ENCODE measurements at regions of chrX and their contacts with region 1.

Region 1: DNA sequence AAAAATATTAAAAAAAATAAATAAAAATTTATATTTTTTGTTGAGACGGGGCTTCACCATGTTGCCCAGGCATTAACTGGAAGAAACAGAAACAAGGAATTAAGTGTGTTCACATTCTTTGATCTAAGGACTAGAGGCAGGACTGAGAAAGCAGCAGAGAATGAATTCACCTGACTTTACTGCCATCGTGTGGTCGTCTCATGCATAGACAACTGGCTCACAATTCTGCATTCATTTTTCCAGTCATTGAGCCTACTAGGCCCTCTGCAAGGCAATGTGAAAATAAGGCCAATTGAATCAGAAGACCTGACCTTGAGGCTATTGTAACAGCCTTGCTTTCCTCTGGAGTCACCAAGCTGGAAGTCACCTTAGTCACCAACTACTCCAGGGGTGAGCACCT is 37.4 kb downstream of the LHFPL1 start:
- DNase-seq: peak; percentile 74
- H3K4me3 Mint-ChIP-seq: no peak overlapping the region
- H3K27ac Mint-ChIP-seq: no peak overlapping the region
- H3K4me1 Mint-ChIP-seq: no peaks in the 10 kb centered on the region
- H3K27me3 Mint-ChIP-seq: peaks cover 56% of the 10 kb centered on the region
- CTCF ChIP-seq: peak; percentile 78

Region 2: DNA sequence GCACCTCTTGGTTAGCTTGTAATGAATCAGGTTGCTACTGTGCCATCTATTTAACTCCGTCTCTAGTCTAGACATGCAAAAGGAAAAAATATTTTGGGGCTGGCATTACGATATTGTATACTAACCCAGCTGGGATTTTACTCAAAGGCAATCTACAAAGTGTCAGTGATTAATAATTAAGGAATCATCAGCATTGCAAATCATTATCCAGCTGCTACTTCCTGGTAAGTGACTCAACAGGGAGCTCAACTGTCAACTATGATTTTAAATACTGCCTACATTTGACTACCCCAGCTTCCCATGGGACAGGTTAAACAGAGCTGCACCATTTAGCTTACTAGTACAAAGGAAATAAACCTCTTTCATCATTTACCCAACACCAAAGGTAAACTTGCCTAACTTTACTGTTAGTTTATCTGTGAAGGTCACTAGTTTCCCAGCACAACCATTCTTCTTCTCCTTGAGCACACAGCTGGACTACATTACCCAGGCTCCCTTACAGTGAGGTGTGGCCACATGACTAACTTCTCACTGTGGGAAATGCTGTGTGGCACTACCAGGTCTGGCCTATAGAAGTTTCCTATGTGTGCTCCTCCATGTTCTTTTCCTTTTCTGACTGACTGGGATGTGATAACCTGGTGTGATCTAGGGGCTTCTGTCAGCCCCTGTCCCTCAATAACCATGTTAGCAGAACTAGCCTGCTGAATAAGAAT is 787.4 kb before region 1 on chrX:
- CTCF ChIA-PET with region 1: no interaction called
- POLR2A ChIA-PET with region 1: no interaction called
- intact Hi-C with region 1: no loop called
- DNase-seq: peak; percentile 19
- H3K4me3 Mint-ChIP-seq: no peak overlapping the region
- H3K27ac Mint-ChIP-seq: no peak overlapping the region
- H3K4me1 Mint-ChIP-seq: no peaks in the 10 kb centered on the region
- H3K27me3 Mint-ChIP-seq: peaks cover 74% of the 10 kb centered on the region
- CTCF ChIP-seq: no peak

Region 3: GRCh38 chrX:111869639-111870034 is 772.7 kb before region 1 on chrX:
- CTCF ChIA-PET with region 1: interaction called, 36 read pairs
- POLR2A ChIA-PET with region 1: no interaction called
- intact Hi-C with region 1: loop called (anchors 1 kb)
- DNase-seq: peak; percentile 61
- H3K4me3 Mint-ChIP-seq: no peak overlapping the region
- H3K27ac Mint-ChIP-seq: no peak overlapping the region
- H3K4me1 Mint-ChIP-seq: peaks cover 6% of the 10 kb centered on the region
- H3K27me3 Mint-ChIP-seq: peaks cover 59% of the 10 kb centered on the region
- CTCF ChIP-seq: peak; percentile 60

Region 4: DNA sequence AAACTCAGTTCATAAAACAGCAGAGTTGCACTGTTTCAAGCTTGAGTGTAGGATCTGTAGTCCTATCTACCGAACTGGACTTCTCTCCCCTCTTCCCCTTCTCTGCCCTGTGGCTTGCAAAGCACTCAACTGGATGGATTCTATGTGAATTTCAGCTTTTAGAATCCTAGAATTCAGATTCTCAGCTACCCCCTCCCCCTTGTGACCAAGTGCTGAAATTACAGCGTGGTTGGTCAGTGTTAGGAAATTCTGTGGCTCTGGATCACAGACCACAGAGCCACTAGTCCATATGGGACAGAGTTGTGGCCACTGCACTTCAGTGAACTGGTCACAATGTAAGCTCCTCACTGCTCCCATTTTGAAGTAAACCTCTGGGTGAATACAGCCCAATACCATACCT is 495.1 kb before region 1 on chrX:
- CTCF ChIA-PET with region 1: no interaction called
- POLR2A ChIA-PET with region 1: interaction called, 3 read pairs
- intact Hi-C with region 1: loop called (anchors 10 kb)
- DNase-seq: peak; percentile 49
- H3K4me3 Mint-ChIP-seq: no peak overlapping the region
- H3K27ac Mint-ChIP-seq: no peak overlapping the region
- H3K4me1 Mint-ChIP-seq: no peaks in the 10 kb centered on the region
- H3K27me3 Mint-ChIP-seq: peaks cover 42% of the 10 kb centered on the region
- CTCF ChIP-seq: peak; percentile 54

Region 5: DNA sequence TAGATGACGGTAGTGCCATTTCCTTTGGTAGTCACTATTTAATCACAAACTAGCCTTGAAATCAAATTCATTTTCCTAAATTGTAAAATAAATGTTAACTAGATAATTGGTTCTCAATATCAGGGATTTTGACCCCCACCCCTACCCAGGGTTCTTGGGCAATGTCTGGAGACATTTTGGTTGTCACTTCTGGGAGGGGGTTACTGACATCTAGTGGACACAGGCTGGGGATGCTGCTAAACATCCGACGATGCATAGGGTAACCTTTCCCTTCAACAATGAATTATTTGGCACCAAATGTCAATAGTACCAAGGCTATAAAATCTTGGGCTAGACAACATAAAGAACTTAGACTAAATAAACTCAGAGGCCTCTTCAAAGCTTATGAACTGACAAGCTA is 274.0 kb before region 1 on chrX:
- CTCF ChIA-PET with region 1: interaction called, 5 read pairs
- POLR2A ChIA-PET with region 1: no interaction called
- intact Hi-C with region 1: loop called (anchors 1 kb)
- DNase-seq: peak; percentile 18
- H3K4me3 Mint-ChIP-seq: no peak overlapping the region
- H3K27ac Mint-ChIP-seq: no peak overlapping the region
- H3K4me1 Mint-ChIP-seq: no peaks in the 10 kb centered on the region
- H3K27me3 Mint-ChIP-seq: peaks cover 63% of the 10 kb centered on the region
- CTCF ChIP-seq: peak; percentile 48

Region 6: DNA sequence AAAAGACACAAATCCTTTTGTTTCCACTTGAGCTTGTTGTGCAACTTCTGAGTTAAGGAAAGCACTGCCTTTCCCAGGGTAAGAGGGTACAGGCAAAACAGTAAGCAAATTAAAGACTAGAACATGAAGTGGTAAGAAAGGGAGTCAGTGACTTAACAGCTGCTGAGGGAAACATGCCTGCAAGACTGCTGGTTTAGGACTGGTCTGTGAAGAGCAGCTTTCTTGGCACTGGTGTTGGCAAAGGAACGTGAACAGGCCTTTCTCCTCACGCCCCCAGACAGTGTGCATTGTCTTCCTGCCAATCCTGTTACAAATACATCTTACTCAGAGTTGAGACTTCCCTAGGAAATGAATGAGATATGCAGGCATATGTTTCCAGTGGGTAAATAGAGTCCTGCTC is 34.8 kb after region 1 on chrX:
- CTCF ChIA-PET with region 1: no interaction called
- POLR2A ChIA-PET with region 1: no interaction called
- intact Hi-C with region 1: no loop called
- DNase-seq: no peak
- H3K4me3 Mint-ChIP-seq: no peak overlapping the region
- H3K27ac Mint-ChIP-seq: no peak overlapping the region
- H3K4me1 Mint-ChIP-seq: peaks cover 5% of the 10 kb centered on the region
- H3K27me3 Mint-ChIP-seq: peaks cover 73% of the 10 kb centered on the region
- CTCF ChIP-seq: no peak